ENCODE measurements at regions of chr20 and their contacts with region 1.

Region 1: DNA sequence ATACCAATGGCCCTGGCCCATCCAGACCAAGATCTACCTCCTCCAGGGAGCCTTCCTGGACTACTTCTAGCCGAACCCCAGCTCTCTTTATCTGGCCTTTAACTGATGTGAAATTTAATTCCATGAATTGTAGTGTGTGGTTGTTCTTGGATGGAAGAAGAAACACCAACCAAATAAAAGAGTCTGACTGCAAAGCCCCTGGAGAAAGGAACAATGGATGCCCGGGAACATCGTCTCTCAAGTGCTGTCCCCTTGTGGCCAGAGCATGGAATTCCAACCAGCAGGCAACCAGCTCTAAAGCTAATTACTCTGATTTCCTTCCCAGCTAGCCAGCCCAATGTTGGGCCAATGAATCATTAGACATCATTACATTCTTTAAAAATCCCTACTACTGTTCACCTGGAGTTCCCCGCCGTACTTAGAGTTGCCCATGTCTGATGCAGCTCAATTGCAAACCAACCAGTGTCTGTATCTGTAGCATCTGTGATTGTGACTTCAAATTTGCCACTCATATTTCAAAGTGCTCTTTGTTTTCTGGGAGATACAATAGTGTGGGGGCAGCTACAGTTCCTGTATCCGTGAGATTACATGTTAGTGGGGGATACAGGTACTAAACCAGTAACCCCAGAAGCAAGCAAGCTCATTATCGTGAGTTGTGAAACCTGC is 141.1 kb downstream of the ANKRD60 start:
- DNase-seq: peak; percentile 62
- H3K4me3 ChIP-seq: no peak overlapping the region
- H3K27ac ChIP-seq: no peak overlapping the region
- H3K4me1 ChIP-seq: no peaks in the 10 kb centered on the region
- H3K27me3 ChIP-seq: no peaks in the 10 kb centered on the region
- CTCF ChIP-seq: peak; percentile 90 to 97
- POLR2A ChIP-seq: no peak

Region 2: GRCh38 chr20:57514273-57514751 is 573.0 kb before region 1 on chr20:
- CTCF ChIA-PET with region 1: no interaction called
- POLR2A ChIA-PET with region 1: no interaction called
- dilution Hi-C with region 1: no loop called
- intact Hi-C with region 1: loop called (anchors 1 kb)
- DNase-seq: peak; percentile 68
- H3K4me3 ChIP-seq: no peak overlapping the region
- H3K27ac ChIP-seq: no peak overlapping the region
- H3K4me1 ChIP-seq: no peaks in the 10 kb centered on the region
- H3K27me3 ChIP-seq: no peaks in the 10 kb centered on the region
- CTCF ChIP-seq: peak; percentile 53 to 63
- POLR2A ChIP-seq: no peak

Region 3: GRCh38 chr20:57622579-57623377 is 464.5 kb before region 1 on chr20:
- CTCF ChIA-PET with region 1: interaction called, 83 read pairs
- POLR2A ChIA-PET with region 1: no interaction called
- dilution Hi-C with region 1: loop called (anchors 25 kb)
- intact Hi-C with region 1: loop called (anchors 1 kb)
- DNase-seq: peak; percentile 58
- H3K4me3 ChIP-seq: no peak overlapping the region
- H3K27ac ChIP-seq: no peak overlapping the region
- H3K4me1 ChIP-seq: peaks cover 7% of the 10 kb centered on the region
- H3K27me3 ChIP-seq: no peaks in the 10 kb centered on the region
- CTCF ChIP-seq: peak; percentile 69 to 92
- POLR2A ChIP-seq: no peak

Region 4: DNA sequence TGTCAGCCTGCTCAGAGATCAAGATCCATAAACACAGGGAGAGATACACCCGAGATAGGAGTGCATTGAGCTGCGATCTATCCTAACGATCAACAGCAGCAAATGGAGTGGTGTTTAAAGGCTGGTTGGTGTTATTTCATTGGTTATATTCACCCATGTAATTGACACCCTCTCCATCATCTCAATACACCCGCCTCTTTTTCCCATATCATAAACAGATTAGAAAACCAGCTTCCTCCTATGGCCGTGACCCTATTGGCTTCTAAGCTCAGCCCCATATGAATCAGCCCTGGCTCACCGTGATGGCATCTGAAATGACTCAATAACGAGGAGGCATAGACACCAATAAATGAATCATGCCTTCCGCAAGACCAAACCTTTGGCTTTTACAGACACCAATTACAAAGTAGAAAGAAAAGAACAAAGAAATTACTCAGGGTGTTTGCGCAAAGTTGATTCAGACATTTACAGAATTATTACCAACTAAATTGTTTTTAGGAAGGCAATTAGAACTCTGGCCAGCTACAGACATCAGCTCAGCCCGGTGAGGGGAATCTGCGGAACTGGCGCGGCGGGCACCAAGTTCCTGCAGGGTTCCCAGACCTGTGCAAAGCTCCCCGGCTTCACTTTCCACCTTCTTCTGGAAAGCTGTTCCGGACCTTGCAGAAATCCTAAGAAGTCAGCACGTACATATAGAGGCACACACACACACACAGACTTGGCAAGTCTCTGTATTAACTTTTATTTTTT is 389.0 kb before region 1 on chr20:
- CTCF ChIA-PET with region 1: interaction called, 13 read pairs
- POLR2A ChIA-PET with region 1: no interaction called
- dilution Hi-C with region 1: no loop called
- intact Hi-C with region 1: no loop called
- DNase-seq: peak; percentile 99
- H3K4me3 ChIP-seq: peak overlapping the region in 1 of 3 experiments; percentile 25
- H3K27ac ChIP-seq: peak overlapping the region; percentile 80
- H3K4me1 ChIP-seq: peaks cover 30% of the 10 kb centered on the region
- H3K27me3 ChIP-seq: no peaks in the 10 kb centered on the region
- CTCF ChIP-seq: no peak
- POLR2A ChIP-seq: peak; percentile 68

Region 5: DNA sequence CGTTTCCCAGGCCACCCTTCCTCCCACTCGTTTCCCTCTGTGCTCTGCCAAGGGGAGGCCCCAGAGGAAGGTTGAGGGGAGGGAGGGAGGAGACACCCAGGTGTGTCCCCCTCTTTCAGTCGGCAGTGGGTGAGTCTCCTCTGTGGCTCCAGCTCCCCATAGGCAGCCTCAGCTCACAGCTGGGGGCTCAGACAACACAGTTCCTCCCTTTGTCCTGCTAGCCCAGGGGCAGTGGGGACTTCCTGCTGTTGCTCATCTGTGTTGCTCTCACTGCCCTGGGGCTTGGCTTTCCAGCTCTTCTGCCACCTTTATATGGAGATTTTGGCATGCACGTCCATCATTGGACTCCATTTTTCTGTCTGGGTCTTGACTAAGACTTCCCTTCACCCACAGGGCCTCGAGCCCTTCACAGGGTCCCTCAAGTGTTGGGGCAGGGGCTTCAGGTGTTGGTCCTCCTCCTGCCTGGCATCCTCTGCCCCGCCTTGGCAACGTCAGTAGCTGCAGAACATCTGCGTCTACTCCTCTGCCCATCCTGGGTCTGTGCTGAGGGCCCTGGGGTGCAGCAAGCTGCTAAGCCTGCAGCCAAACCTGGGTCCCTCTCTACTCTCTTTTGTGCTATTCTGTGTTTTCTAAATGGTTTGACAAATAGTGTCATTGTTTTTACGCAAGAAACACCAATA is 187.0 kb before region 1 on chr20:
- CTCF ChIA-PET with region 1: no interaction called
- POLR2A ChIA-PET with region 1: no interaction called
- dilution Hi-C with region 1: no loop called
- intact Hi-C with region 1: no loop called
- DNase-seq: no peak
- H3K4me3 ChIP-seq: no peak overlapping the region
- H3K27ac ChIP-seq: no peak overlapping the region
- H3K4me1 ChIP-seq: no peaks in the 10 kb centered on the region
- H3K27me3 ChIP-seq: no peaks in the 10 kb centered on the region
- CTCF ChIP-seq: no peak
- POLR2A ChIP-seq: no peak

Region 6: GRCh38 chr20:57938158-57939108 is 148.9 kb before region 1 on chr20:
- CTCF ChIA-PET with region 1: no interaction called
- POLR2A ChIA-PET with region 1: no interaction called
- dilution Hi-C with region 1: no loop called
- intact Hi-C with region 1: loop called (anchors 5 kb)
- DNase-seq: peak; percentile 25
- H3K4me3 ChIP-seq: no peak overlapping the region
- H3K27ac ChIP-seq: no peak overlapping the region
- H3K4me1 ChIP-seq: no peaks in the 10 kb centered on the region
- H3K27me3 ChIP-seq: no peaks in the 10 kb centered on the region
- CTCF ChIP-seq: no peak
- POLR2A ChIP-seq: no peak

Region 7: GRCh38 chr20:58065508-58066361 is 21.6 kb before region 1 on chr20:
- CTCF ChIA-PET with region 1: interaction called, 21 read pairs
- POLR2A ChIA-PET with region 1: no interaction called
- dilution Hi-C with region 1: no loop called
- intact Hi-C with region 1: no loop called
- DNase-seq: no peak
- H3K4me3 ChIP-seq: no peak overlapping the region
- H3K27ac ChIP-seq: no peak overlapping the region
- H3K4me1 ChIP-seq: no peaks in the 10 kb centered on the region
- H3K27me3 ChIP-seq: peaks cover 0 to 23% of the 10 kb centered on the region in 2 experiments
- CTCF ChIP-seq: no peak
- POLR2A ChIP-seq: no peak

Region 8: DNA sequence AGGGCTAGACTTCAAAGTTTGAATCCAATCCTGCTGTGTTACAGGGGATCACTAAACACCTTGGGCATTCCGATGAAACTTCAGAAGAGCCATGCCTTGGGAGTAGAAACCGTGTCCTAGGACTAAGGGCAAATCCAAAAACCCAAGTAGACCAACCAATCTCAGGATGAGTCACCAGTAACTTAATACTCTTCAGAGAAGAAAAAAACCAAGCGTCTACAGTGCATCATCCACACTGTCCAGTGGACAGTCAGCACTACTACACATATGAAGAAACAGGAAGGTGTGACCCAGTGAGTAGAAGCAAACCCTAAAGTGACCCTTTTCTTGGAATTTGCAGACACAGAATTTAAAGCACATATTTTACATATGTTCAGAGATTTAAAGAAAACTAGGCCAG is 262.3 kb after region 1 on chr20:
- CTCF ChIA-PET with region 1: no interaction called
- POLR2A ChIA-PET with region 1: no interaction called
- dilution Hi-C with region 1: no loop called
- intact Hi-C with region 1: no loop called
- DNase-seq: no peak
- H3K4me3 ChIP-seq: no peak overlapping the region
- H3K27ac ChIP-seq: no peak overlapping the region
- H3K4me1 ChIP-seq: no peaks in the 10 kb centered on the region
- H3K27me3 ChIP-seq: no peaks in the 10 kb centered on the region
- CTCF ChIP-seq: no peak
- POLR2A ChIP-seq: no peak